HCT116 (cell line): ENCODE measurements at regions of chr19 and their contacts with region 1.

Region 1: DNA sequence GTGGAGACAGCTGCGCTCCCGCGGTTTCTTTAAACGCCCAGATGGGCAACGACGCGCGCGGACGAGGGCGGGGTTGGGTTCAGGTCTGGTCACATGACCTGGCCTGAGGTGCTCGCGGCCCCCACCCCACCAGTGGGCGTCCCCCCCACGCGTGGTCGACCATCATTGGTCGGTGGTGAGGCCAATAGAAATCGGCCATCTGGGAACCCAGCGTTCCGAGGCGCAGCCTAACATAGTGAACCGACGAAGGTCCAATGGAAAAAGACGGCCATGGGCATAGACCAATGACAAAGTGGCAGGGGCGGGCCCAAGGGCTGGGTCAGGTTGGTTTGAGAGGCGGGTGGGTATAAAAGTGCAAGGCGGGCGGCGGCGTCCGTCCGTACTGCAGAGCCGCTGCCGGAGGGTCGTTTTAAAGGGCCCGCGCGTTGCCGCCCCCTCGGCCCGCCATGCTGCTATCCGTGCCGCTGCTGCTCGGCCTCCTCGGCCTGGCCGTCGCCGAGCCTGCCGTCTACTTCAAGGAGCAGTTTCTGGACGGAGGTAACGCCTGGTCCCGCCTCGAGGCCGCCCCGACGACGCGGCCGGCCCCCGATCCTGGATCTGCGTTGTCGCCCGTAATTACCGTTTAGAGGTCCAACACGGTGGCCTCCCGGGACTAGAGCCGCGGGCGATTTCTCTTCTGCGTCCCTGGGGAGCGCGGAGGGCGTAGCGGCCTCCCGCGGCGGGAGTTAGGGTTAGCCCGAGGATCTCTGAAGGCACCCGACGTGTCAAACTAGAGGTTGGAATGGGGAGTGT is at the start of gene CALR:
- DNase-seq: peak; percentile 99
- ATAC-seq: peak; percentile 90
- H3K4me3 ChIP-seq: peak within 1 kb of the TSS; percentile 98 to 99
- H3K27ac ChIP-seq: peak within 1 kb of the TSS; percentile 79
- H3K4me1 ChIP-seq: peaks cover 15 to 47% of the 10 kb centered on the region in 2 experiments
- H3K27me3 ChIP-seq: no peaks in the 10 kb centered on the region
- CTCF ChIP-seq: 0 out of 6 replicates have a peak, but pooled peaks of 1 of the 3 experiments have one; percentile 16
- POLR2A ChIP-seq: peak; percentile 96
- RAD21 ChIP-seq: no peak
- total RNA-seq, gene CALR: 739 TPM

Region 2: DNA sequence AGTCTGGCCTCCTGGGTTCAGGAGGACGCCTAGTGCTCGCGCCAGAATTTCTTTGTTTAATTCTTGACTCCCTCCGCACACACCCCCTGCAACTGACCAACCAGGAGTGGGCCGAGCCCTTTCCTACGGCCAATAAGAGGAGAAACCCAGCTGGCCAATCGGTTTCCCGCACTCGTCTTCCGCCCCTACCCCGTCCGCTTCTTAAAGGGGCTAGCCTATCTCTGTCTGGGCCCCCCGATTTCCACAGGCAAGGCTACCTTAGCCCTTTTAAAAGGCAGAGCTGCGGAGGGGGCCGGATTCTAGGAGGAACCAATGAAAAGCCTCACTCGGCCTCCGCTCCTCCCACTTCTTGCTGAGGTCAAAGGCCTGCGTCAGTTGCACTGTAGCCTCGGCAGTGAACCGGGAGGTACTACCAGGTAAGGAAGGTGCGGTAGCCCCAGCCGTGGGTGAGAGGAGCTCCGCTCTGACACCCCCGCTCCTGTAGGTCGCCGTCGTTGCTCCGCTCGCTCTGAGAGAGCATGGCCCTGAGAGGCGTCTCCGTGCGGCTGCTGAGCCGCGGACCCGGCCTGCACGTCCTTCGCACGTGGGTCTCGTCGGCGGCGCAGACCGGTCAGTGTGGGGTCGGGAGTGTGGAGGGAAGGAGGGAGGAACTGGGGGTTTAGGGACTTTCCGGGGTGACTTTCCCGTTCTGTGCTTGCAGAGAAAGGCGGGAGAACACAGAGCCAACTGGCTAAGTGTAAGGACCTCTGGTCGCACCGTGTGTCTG is 47.5 kb before region 1 on chr19 and contains the start of gene GCDH:
- CTCF ChIA-PET with region 1: no interaction called
- POLR2A ChIA-PET with region 1: interaction called, 4 read pairs
- RAD21 ChIA-PET with region 1: no interaction called
- intact Hi-C with region 1: loop called (anchors 2 kb)
- DNase-seq: peak; percentile 98
- ATAC-seq: peak; percentile 95
- H3K4me3 ChIP-seq: peak within 1 kb of the TSS; percentile 80 to 95
- H3K27ac ChIP-seq: peak within 1 kb of the TSS; percentile 31; the same call in 1 of the 2 replicates
- H3K4me1 ChIP-seq: peaks cover 8 to 17% of the 10 kb centered on the region in 2 experiments; a peak in 3 of 4 replicates
- H3K27me3 ChIP-seq: no peaks in the 10 kb centered on the region
- CTCF ChIP-seq: no peak
- POLR2A ChIP-seq: no peak
- RAD21 ChIP-seq: no peak
- total RNA-seq, gene GCDH: 23.2 TPM